Panc1 (cell line): ENCODE measurements at regions of chr1 and their contacts with region 1.

Region 1: GRCh38 chr1:39354572-39354971 is 136.9 kb upstream of the BMP8A start:
- DNase-seq: no peak
- ATAC-seq: no peak
- H3K4me3 ChIP-seq: no peak overlapping the region
- H3K27ac ChIP-seq: no peak overlapping the region
- H3K4me1 ChIP-seq: no peaks in the 10 kb centered on the region
- H3K27me3 ChIP-seq: no peaks in the 10 kb centered on the region
- CTCF ChIP-seq: 0 out of 2 replicates have a peak, but pooled peaks have one; percentile 17

Region 2: GRCh38 chr1:39091845-39092645 is 262.5 kb before region 1 on chr1:
- CTCF ChIA-PET with region 1: interaction called, 11 read pairs
- POLR2A ChIA-PET with region 1: no interaction called
- in situ Hi-C with region 1: no loop called
- intact Hi-C with region 1: no loop called
- DNase-seq: no peak
- ATAC-seq: peak; percentile 85
- H3K4me3 ChIP-seq: no peak overlapping the region
- H3K27ac ChIP-seq: no peak overlapping the region
- H3K4me1 ChIP-seq: 0 out of 2 replicates have a peak, but pooled peaks cover 2% of the 10 kb centered on the region
- H3K27me3 ChIP-seq: no peaks in the 10 kb centered on the region
- CTCF ChIP-seq: peak; percentile 89

Region 3: GRCh38 chr1:39491146-39491921 is 136.8 kb after region 1 on chr1 and contains the start of gene BMP8A:
- CTCF ChIA-PET with region 1: no interaction called
- POLR2A ChIA-PET with region 1: interaction called, 16 read pairs
- in situ Hi-C with region 1: no loop called
- intact Hi-C with region 1: no loop called
- DNase-seq: no peak
- ATAC-seq: peak; percentile 86
- H3K4me3 ChIP-seq: peak within 1 kb of the TSS; percentile 47 to 50
- H3K27ac ChIP-seq: no peak within 1 kb of the TSS
- H3K4me1 ChIP-seq: peaks cover 5% of the 10 kb centered on the region
- H3K27me3 ChIP-seq: no peaks in the 10 kb centered on the region
- CTCF ChIP-seq: no peak
- total RNA-seq, gene BMP8A: 0.54 TPM